CD4-positive, alpha-beta memory T cell (primary cell): ENCODE measurements at regions of chr12 and their contacts with region 1.

Region 1: DNA sequence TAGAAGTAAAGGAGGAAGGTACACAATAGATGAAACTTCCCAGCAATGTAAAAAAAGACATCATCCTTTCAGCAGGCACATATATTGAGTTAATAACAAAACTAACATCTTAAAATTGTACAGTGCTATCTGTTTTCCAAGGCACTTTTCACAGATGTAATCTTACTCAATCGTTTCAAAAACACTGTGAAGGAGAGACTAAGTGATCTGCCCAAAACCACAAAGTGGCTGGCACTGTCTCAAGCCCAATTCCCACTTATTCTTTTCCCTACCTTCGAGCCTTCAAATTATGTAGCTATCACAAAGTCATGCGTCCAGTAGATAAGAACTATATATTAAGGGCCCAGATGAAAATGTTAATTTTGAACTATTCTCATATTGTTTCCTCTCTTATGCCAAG is 193.6 kb upstream of the RASSF8 start:
- DNase-seq: no peak
- H3K4me3 ChIP-seq: no peak overlapping the region
- H3K4me3 Mint-ChIP-seq: no peak overlapping the region
- H3K27ac ChIP-seq: no peak overlapping the region
- H3K27ac Mint-ChIP-seq: no peak overlapping the region
- H3K4me1 ChIP-seq: no peaks in the 10 kb centered on the region
- H3K4me1 Mint-ChIP-seq: no peaks in the 10 kb centered on the region
- H3K27me3 ChIP-seq: no peaks in the 10 kb centered on the region
- H3K27me3 Mint-ChIP-seq: no peaks in the 10 kb centered on the region

Region 2: GRCh38 chr12:25347716-25348271 is 417.1 kb before region 1 on chr12:
- CTCF ChIA-PET with region 1: no interaction called
- POLR2A ChIA-PET with region 1: no interaction called
- intact Hi-C with region 1: no loop called
- DNase-seq: no peak
- H3K4me3 ChIP-seq: no peak overlapping the region
- H3K4me3 Mint-ChIP-seq: no peak overlapping the region
- H3K27ac ChIP-seq: no peak overlapping the region
- H3K27ac Mint-ChIP-seq: peak overlapping the region in 1 of 7 donors; percentile 51
- H3K4me1 ChIP-seq: no peaks in the 10 kb centered on the region
- H3K4me1 Mint-ChIP-seq: peaks cover 3 to 13% (median 5%) of the 10 kb centered on the region in 4 donors
- H3K27me3 ChIP-seq: no peaks in the 10 kb centered on the region
- H3K27me3 Mint-ChIP-seq: peaks cover 0 to 3% of the 10 kb centered on the region in 2 donors

Region 3: GRCh38 chr12:25993901-25994651 is 229.2 kb after region 1 on chr12:
- CTCF ChIA-PET with region 1: no interaction called
- POLR2A ChIA-PET with region 1: no interaction called
- intact Hi-C with region 1: loop called (anchors 5 kb)
- DNase-seq: no peak
- H3K4me3 ChIP-seq: no peak overlapping the region
- H3K4me3 Mint-ChIP-seq: no peak overlapping the region
- H3K27ac ChIP-seq: no peak overlapping the region
- H3K27ac Mint-ChIP-seq: no peak overlapping the region
- H3K4me1 ChIP-seq: no peaks in the 10 kb centered on the region
- H3K4me1 Mint-ChIP-seq: no peaks in the 10 kb centered on the region
- H3K27me3 ChIP-seq: no peaks in the 10 kb centered on the region
- H3K27me3 Mint-ChIP-seq: peaks cover 3 to 4% of the 10 kb centered on the region in 2 donors